ENCODE measurements at regions of chr7 and their contacts with region 1.

Region 1: DNA sequence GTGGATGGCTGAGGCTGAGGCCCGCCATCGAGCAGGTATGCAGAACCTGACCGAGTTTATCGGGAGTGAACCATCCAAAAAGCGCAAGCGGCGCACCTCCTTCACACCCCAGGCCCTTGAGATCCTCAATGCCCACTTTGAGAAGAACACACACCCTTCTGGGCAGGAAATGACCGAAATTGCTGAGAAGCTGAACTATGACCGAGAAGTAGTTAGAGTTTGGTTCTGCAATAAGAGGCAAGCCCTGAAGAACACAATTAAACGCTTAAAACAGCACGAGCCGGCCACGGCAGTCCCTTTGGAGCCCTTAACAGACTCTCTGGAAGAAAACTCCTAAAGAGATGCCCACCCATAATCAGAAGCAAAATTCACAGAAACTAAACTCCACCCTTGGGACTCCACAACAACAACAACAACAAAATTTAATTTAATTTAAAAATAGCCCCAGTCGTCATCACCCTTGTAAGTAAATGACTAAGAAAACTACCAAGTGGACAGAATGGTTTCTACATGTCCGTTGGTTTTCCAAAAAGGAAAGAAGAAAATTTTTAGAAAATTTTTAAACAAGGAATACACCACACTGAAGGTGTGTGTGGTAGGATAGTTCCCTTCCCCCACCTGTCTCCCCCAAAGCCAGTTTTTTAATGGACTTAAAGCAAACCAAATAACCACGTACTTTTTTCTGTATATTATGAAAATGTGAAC is 101.7 kb upstream of the YAE1 start:
- DNase-seq: no peak
- H3K4me3 ChIP-seq: no peak overlapping the region
- H3K27ac ChIP-seq: no peak overlapping the region
- H3K4me1 ChIP-seq: no peaks in the 10 kb centered on the region
- H3K27me3 ChIP-seq: no peaks in the 10 kb centered on the region
- CTCF ChIP-seq: no peak

Region 2: GRCh38 chr7:38932509-38933168 is 531.9 kb before region 1 on chr7:
- intact Hi-C with region 1: loop called (anchors 5 kb)
- DNase-seq: peak; percentile 64
- H3K4me3 ChIP-seq: no peak overlapping the region
- H3K27ac ChIP-seq: no peak overlapping the region
- H3K4me1 ChIP-seq: no peaks in the 10 kb centered on the region
- H3K27me3 ChIP-seq: no peaks in the 10 kb centered on the region
- CTCF ChIP-seq: peak; percentile 81

Region 3: GRCh38 chr7:39605087-39605486 is 140.6 kb after region 1 on chr7:
- intact Hi-C with region 1: no loop called
- DNase-seq: no peak
- H3K4me3 ChIP-seq: no peak overlapping the region
- H3K27ac ChIP-seq: no peak overlapping the region
- H3K4me1 ChIP-seq: no peaks in the 10 kb centered on the region
- H3K27me3 ChIP-seq: no peaks in the 10 kb centered on the region
- CTCF ChIP-seq: no peak

Measured in colonic mucosa (tissue), 4 donors.